Cardiac septum (tissue), 1 donor: ENCODE measurements at regions of chr10 and their contacts with region 1.

Region 1: GRCh38 chr10:21495752-21496342 is 29.6 kb downstream of the SKIDA1 start:
- DNase-seq: peak; percentile 94

Region 2: GRCh38 chr10:21083871-21084295 is 412.0 kb before region 1 on chr10:
- intact Hi-C with region 1: loop called (anchors 10 kb)
- DNase-seq: no peak

Region 3: GRCh38 chr10:21364196-21365114 is 131.4 kb before region 1 on chr10:
- intact Hi-C with region 1: loop called (anchors 10 kb)
- DNase-seq: no peak

Region 4: DNA sequence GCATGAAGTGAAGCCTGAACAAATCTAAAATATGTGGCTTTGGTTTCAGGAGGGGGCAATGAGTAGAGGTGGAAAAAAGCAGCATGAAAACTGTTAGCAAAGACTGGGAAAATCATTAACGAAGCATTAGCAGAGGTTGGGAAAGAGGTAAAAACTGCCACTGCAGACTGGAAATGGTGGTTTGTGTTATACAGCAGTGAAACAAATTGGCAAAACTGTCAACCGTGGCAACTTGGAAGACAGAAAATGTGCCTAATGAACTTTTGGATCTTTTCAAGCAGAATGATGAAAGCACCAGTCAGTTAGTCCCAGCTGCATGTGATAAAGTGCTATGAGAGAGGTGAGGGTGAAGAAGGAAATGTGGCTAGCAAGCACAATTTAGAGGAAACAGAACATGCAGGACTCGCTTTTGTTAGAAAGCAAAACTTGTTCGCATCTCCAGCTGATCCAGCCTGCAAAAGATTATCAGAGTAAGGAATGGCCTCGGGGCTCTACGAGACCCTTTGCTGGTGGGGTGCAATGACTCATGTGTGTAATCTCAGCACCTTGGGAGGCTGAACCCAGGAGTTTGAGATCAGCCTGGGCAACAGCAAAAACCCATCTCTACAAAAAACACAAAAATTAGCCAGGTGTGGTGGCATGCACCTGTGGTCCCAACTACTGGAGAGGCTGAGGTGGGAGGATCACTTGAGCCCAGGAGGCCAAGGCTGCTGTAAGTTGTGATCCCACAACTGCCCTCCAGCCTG is 16.1 kb before region 1 on chr10:
- intact Hi-C with region 1: no loop called
- DNase-seq: no peak

Region 5: DNA sequence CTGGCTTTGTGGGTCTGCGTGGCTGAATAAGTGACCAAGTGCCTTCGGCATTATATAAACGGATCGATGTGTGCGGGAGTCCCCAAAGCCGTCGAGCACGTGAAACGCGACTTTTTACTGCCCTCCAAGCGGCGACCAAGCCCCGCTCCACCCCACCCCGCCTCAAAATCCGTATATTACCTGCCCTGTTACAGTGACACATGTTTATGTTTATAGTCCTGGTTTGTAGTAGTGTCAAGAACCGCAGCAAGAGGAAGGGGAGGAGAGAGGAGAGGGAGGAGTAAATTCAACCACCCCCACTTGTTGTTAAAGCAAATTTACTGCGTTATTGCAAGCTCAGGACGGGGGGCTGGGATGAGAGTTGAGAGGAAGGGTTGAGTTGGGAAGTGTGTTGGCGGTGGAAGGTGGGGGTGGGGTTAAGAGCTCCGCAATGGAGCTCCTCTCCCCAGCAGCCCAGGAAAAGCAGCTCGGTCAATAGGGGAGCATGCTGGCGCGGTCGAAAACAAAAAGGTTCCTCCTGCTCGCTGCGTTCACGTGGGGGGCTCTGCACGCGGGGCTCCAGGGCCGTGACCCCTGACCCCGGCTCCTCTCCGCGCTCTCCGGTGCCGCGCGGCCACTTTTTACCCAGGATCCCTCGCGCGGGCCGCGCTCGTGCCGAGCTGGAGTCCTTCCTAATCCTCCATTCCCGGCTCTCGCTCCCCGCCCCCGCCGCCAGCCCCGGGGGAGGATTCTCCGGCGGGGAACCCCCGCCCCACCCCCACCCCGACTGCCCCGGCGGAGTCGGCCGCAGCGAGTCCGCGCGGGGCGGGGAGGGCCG is 29.7 kb after region 1 on chr10 and contains the start of gene SKIDA1:
- intact Hi-C with region 1: loop called (anchors 2 kb)
- DNase-seq: peak; percentile 90
- total RNA-seq, gene SKIDA1: 1.8 TPM

Region 6: GRCh38 chr10:21732067-21732772 is 236.4 kb after region 1 on chr10:
- intact Hi-C with region 1: loop called (anchors 1 kb)
- DNase-seq: no peak